Activated CD4-positive, alpha-beta T cell treated with anti-CD3 and anti-CD28 coated beads for 36 hours (primary cell): ENCODE measurements at regions of chr6 and their contacts with region 1.

Region 1: DNA sequence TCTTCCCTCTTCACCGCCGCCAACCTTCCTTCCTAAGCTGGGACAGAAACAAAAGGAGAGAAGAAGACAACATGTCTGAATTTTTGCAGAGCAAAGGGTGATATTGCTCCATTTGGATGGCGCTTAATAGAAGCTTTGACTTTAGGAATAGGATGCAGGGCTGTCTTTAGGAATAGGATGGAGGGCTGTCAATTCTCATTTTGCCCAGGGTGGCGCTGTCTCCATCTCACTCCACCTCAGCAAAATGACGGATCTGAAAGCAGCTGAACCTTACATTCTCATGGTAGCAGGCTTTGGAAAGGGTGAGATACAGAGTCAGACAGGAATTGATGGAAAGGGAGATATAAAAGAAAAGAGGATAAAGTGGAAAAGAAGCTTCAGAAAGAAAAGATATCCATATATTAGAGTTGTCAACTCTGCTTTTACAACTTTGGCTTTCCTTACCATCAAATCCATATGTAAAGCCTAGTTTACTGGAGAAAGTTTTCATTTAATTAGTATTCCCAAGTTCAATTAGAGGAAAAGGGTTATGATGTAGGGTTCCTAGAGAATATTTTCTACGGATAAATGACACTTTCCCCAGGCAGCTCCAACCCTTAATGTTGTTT is 2.4 kb downstream of the MTCL3 start:
- DNase-seq: peak; percentile 69
- ATAC-seq: peak; percentile 59
- H3K4me3 Mint-ChIP-seq: peak overlapping the region; percentile 87
- H3K27ac Mint-ChIP-seq: peak overlapping the region; percentile 58
- H3K4me1 Mint-ChIP-seq: peaks cover 40% of the 10 kb centered on the region
- H3K27me3 Mint-ChIP-seq: peaks cover 49% of the 10 kb centered on the region

Region 2: DNA sequence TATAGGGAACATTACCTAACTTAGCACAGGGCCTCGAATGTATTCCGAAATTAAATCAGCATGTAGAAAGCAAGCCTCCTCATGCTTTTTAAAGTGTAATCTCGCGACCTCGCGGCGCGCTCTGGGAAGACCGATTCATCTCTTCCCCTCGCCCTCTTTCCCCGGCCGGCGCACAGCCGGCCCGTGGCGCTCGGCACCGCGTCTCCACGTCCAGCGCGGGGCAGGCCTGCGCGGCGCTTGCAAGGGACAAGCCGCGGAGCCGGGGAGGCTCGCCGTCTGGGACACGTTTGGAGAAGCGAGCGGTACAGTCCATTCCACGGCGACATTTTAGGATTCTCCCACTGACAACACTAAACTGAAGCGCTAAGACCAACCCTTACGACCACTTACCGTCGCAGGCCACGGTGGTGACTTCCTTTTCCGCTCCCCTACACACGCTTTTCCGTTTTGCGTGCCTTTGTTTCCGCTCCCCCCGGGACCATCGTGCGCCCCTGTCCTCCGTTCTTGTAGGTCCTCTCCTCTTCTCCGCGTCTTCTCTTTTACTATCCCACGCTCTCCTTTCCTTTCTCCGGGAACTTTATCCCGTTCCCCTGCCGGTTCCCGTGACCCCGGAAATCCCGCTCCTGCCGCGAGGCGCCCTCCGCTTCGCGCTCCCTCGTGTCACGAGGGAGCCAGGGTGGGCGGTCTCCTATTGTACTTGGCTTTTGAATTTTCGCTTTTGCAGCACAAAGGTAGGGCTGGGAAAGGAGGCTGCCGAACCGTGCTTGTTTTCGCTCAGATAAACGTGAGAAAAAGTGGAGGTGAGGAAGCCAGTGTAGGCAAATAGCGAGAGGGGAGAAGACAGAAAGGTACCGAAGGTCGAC is 173.6 kb before region 1 on chr6 and contains the start of gene ECHDC1:
- CTCF ChIA-PET with region 1: interaction called, 10 read pairs
- POLR2A ChIA-PET with region 1: no interaction called
- intact Hi-C with region 1: loop called (anchors 1 to 5 kb)
- DNase-seq: peak; percentile 85
- ATAC-seq: peak; percentile 85
- H3K4me3 Mint-ChIP-seq: no peak within 1 kb of the TSS
- H3K27ac Mint-ChIP-seq: no peak within 1 kb of the TSS
- H3K4me1 Mint-ChIP-seq: peaks cover 19% of the 10 kb centered on the region
- H3K27me3 Mint-ChIP-seq: no peaks in the 10 kb centered on the region
- total RNA-seq, gene ECHDC1: 31.1 to 48.2 TPM

Region 3: DNA sequence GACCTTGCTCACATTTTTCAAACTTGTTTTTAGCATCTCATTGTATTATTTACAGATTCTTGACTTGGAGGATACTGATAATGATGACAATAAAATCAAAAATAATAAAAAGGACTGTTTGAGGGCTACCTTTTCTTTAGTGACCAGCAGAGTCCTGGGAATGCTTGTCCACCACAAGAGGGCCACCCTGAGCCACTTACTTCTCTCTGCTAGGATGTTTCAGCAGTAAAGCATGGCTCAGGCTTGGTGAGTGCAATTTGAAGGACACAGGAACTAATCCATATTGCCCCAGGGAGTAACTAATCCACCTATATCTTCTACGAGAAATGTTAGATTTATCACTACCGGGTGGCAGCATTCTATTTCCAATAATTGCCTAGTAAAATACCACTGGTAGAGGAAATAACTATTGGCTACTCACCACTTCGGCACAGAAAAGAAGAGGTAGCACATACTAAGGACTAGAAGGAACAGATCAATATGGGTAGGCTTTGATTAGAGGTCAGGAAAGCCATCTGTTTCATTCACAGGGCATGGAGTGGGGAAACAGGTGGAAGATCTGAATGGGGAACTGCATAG is 51.8 kb before region 1 on chr6:
- CTCF ChIA-PET with region 1: interaction called, 12 read pairs
- POLR2A ChIA-PET with region 1: interaction called, 7 read pairs
- intact Hi-C with region 1: loop called (anchors 1 kb)
- DNase-seq: peak; percentile 84
- ATAC-seq: peak; percentile 82
- H3K4me3 Mint-ChIP-seq: no peak overlapping the region
- H3K27ac Mint-ChIP-seq: no peak overlapping the region
- H3K4me1 Mint-ChIP-seq: no peaks in the 10 kb centered on the region
- H3K27me3 Mint-ChIP-seq: peaks cover 2% of the 10 kb centered on the region

Region 4: DNA sequence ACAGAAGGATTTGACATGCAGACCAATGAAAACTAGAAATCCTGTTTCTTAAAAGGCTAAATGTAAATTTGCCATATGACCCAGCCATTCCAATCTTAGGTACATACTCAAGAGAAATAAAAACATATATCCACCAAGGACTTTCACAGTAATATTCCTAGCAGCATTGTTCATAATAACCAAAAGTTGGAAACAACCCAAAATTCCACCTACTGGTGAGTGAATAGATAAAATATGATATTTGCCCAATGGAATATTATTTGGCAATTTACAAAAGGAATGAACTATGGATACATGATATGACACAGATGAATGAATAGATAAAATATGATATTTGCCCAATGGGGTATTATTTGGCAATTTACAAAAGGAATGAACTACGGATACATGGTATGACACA is 20.3 kb before region 1 on chr6:
- CTCF ChIA-PET with region 1: interaction called, 36 read pairs
- POLR2A ChIA-PET with region 1: no interaction called
- intact Hi-C with region 1: no loop called
- DNase-seq: no peak
- ATAC-seq: no peak
- H3K4me3 Mint-ChIP-seq: no peak overlapping the region
- H3K27ac Mint-ChIP-seq: no peak overlapping the region
- H3K4me1 Mint-ChIP-seq: no peaks in the 10 kb centered on the region
- H3K27me3 Mint-ChIP-seq: peaks cover 2% of the 10 kb centered on the region

Region 5: DNA sequence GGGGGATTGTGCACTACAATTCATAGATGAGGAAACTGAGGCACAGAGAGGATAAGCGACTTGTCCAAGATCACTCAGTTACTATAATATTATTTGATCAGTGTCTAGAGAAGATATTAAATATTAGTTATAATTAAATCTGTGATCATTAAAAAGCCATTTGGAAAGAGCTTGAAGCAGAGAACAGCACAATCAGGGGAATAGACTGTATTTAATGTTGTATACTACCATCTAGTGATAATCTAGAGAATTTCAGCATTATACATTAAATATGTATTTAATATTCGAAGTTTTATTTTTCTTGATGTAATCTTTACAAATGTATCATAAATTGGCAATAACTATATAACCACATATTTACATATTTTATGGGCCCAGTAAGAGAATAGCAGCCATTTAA is 22.5 kb after region 1 on chr6:
- CTCF ChIA-PET with region 1: interaction called, 15 read pairs
- POLR2A ChIA-PET with region 1: interaction called, 3 read pairs
- intact Hi-C with region 1: no loop called
- DNase-seq: no peak
- ATAC-seq: peak; percentile 57
- H3K4me3 Mint-ChIP-seq: no peak overlapping the region
- H3K27ac Mint-ChIP-seq: no peak overlapping the region
- H3K4me1 Mint-ChIP-seq: peaks cover 2% of the 10 kb centered on the region
- H3K27me3 Mint-ChIP-seq: peaks cover 15% of the 10 kb centered on the region